Esophagus muscularis mucosa (tissue), 4 donors: ENCODE measurements at regions of chr1 and their contacts with region 1.

Region 1: DNA sequence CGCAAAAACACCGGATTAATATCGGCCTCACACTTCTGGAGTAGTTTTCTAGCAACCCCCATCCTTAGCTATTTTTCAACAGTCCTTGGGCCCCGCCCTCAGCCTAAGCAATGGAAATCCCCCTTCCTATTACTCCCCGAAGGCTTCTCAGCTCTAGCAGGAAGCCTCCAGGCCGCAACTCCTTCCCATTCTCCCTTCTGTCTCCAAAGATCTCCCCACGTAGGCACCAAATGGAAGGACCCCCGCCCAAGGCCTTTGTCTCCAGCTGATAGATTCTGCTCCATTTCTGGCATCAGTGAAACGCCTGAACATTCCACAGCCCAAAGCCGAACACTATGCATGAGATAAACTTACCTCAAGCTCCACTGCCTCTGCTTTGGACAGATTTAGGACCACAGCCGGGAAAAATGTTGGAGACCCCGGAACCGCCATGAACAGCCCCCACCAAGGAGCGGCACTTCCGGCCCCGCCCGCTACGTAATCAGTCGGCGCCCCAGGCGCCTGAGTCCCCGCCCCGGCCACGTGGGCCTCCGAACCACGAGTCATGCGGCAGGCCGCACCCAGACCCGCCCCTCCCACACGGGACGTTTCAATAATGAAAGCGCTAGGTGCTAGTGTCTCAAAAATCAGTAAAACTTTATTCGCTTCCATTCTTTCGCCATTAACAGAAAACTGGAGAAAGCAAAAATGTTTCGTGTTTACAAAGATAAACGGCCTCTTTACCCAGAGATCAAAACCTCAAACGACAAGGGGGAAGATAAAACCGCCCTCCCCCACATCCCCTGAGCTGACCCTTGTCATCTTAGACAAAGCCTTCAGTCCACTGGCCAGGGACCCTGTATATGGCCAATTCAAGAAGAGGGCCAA is at the start of gene NRAS:
- DNase-seq: peak; percentile 98
- H3K4me3 ChIP-seq: peak within 1 kb of the TSS; percentile 73 to 94 (median 88)
- H3K27ac ChIP-seq: peak within 1 kb of the TSS; percentile 88 to 94 (median 90)
- H3K4me1 ChIP-seq: peaks cover 14 to 32% (median 27%) of the 10 kb centered on the region in 4 donors
- H3K27me3 ChIP-seq: no peaks in the 10 kb centered on the region
- CTCF ChIP-seq: peak in 2 of 3 experiments; percentile 11 to 24
- EP300 ChIP-seq: no peak
- POLR2A ChIP-seq: peak; percentile 47
- total RNA-seq, gene NRAS: 12.1 to 20.9 (median 14.7) TPM

Region 2: GRCh38 chr1:114511032-114511785 is 205.3 kb before region 1 on chr1 and contains the start of gene TRIM33:
- intact Hi-C with region 1: loop called (anchors 5 kb)
- DNase-seq: peak; percentile 96
- H3K4me3 ChIP-seq: peak within 1 kb of the TSS; percentile 81 to 100 (median 98)
- H3K27ac ChIP-seq: peak within 1 kb of the TSS; percentile 95 to 98 (median 98)
- H3K4me1 ChIP-seq: peaks cover 18 to 46% (median 42%) of the 10 kb centered on the region in 4 donors
- H3K27me3 ChIP-seq: no peaks in the 10 kb centered on the region
- CTCF ChIP-seq: no peak
- EP300 ChIP-seq: no peak
- POLR2A ChIP-seq: peak; percentile 54
- total RNA-seq, gene TRIM33: 28.0 to 36.6 (median 29.5) TPM

Region 3: GRCh38 chr1:114581335-114582287 is 134.9 kb before region 1 on chr1 and contains the start of gene BCAS2:
- intact Hi-C with region 1: loop called (anchors 5 kb)
- DNase-seq: peak; percentile 99
- H3K4me3 ChIP-seq: peak within 1 kb of the TSS; percentile 65 to 80 (median 68)
- H3K27ac ChIP-seq: peak within 1 kb of the TSS; percentile 88 to 93 (median 90)
- H3K4me1 ChIP-seq: peaks cover 31 to 42% (median 37%) of the 10 kb centered on the region in 4 donors
- H3K27me3 ChIP-seq: no peaks in the 10 kb centered on the region
- CTCF ChIP-seq: no peak
- EP300 ChIP-seq: peak; percentile 68
- POLR2A ChIP-seq: peak; percentile 62
- total RNA-seq, gene BCAS2: 25.9 to 44.0 (median 34.1) TPM

Region 4: DNA sequence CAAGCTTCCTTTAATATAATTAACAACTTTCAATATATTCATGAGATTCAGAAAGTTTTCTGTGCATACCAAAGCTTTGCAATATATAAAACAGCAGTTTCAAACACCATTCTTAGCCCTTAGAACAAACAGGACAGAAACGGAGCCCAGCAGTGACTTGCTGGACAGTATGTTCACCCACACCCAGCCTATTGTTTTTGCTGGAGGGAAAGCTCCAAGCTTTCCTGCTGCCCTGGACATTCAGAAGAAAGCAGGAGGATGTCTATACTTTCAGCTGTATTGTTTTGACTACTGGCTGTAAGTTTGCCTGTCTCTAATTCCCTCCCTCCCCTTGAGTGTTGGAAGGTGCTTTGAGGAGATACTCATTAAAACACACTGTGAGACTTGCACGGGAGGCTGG is 56.3 kb before region 1 on chr1:
- intact Hi-C with region 1: no loop called
- DNase-seq: no peak
- H3K4me3 ChIP-seq: no peak overlapping the region
- H3K27ac ChIP-seq: no peak overlapping the region
- H3K4me1 ChIP-seq: no peaks in the 10 kb centered on the region
- H3K27me3 ChIP-seq: no peaks in the 10 kb centered on the region
- CTCF ChIP-seq: no peak
- EP300 ChIP-seq: no peak
- POLR2A ChIP-seq: no peak

Region 5: GRCh38 chr1:114670083-114671010 is 46.2 kb before region 1 on chr1:
- intact Hi-C with region 1: loop called (anchors 5 kb)
- DNase-seq: peak; percentile 98
- H3K4me3 ChIP-seq: peak overlapping the region; percentile 66 to 94 (median 72)
- H3K27ac ChIP-seq: peak overlapping the region; percentile 67 to 83 (median 74)
- H3K4me1 ChIP-seq: peaks cover 0 to 18% (median 14%) of the 10 kb centered on the region in 4 donors
- H3K27me3 ChIP-seq: no peaks in the 10 kb centered on the region
- CTCF ChIP-seq: peak in 1 of 3 experiments; percentile 49
- EP300 ChIP-seq: no peak
- POLR2A ChIP-seq: no peak

Region 6: DNA sequence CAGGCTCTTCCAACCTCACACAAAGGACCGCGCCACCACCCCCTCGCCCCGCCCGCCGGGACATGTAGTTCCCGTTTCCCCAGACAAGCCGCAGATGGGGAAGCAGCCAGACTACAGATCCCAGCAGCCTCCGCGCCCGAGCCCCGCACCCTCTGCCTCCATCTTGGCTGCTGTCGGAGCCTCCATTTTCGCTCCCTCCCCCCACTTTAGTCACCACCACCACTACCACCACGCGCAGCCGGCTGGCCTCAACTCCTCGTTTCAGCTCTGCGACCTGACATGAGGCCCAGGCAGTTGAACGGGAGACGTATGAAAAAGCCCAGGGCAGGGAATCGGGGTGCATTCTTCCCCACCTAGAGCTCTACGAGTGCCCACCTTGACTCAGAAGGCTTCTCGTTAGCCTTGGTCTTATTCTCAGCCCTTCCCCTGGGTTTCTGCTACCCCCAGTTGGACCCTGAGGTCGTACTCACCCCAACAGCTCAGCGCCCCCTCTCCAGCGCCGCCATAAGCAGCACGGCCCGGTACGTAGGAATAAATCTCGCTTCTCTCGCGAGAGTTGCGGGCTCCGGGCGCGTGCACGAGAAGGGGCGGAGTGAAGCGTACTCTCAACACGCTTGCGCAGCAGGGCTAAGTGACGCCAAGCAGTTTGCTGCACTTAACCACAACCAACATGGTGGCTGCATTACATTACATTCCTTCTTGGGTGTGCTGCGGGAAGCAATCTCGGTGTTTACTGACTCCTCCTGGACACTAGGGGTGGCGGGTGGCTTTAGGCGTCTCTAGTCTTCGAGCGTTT is 41.1 kb after region 1 on chr1 and contains the start of gene CSDE1:
- intact Hi-C with region 1: loop called (anchors 5 kb)
- DNase-seq: peak; percentile 98
- H3K4me3 ChIP-seq: peak within 1 kb of the TSS; percentile 75 to 96 (median 91)
- H3K27ac ChIP-seq: peak within 1 kb of the TSS; percentile 97 to 99 (median 99)
- H3K4me1 ChIP-seq: peaks cover 43 to 50% (median 49%) of the 10 kb centered on the region in 4 donors
- H3K27me3 ChIP-seq: no peaks in the 10 kb centered on the region
- CTCF ChIP-seq: peak in 2 of 3 experiments; percentile 42 to 47
- EP300 ChIP-seq: no peak
- POLR2A ChIP-seq: peak; percentile 64
- total RNA-seq, gene CSDE1: 614 to 1,394 (median 877) TPM

Region 7: GRCh38 chr1:115170961-115171392 is 454.4 kb after region 1 on chr1:
- intact Hi-C with region 1: no loop called
- DNase-seq: peak; percentile 68
- H3K4me3 ChIP-seq: no peak overlapping the region
- H3K27ac ChIP-seq: peak overlapping the region in 1 of 4 donors; percentile 26
- H3K4me1 ChIP-seq: peaks cover 0 to 5% (median 0%) of the 10 kb centered on the region in 4 donors
- H3K27me3 ChIP-seq: no peaks in the 10 kb centered on the region
- CTCF ChIP-seq: no peak
- EP300 ChIP-seq: no peak
- POLR2A ChIP-seq: no peak